ENCODE measurements at regions of chr2 and their contacts with region 1.

Region 1: DNA sequence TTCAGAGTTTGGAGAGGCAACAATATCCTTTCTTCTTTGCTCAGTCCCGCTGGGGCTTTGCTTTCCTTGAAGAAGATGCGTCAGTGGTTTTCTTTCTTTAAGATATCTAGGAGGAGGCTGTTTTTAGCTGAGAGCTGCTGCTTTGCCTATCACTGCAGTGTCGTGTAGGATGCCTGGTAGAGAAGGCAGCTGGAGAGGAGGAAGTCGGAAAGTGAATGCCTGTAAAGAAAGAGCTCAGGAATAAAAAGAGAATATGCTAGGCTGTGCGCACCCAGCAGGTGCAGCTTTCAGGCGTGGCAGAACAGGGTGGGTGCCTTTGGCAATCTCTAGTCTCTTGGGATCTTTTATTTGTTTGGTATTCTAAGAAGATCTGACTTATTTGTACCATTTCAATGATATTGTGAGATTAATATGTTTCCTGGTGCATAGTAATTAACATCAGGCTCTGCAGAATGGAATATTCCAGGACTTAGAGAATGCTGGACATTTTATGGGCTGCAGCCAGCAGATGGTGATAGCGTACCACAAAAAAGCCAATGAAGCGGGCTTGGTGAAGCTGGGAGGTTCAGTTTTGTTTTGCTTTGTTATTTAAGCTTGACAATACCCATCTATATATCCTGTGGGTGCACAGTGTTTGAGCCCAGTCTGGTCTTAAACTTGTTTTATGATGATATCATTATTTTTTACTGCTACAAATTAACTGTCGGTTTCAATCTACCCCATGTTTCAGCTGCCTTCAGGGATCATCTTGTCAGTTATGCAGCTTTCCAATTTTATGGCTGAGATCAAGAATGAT is 34.9 kb downstream of the CAVIN2 start:
- DNase-seq: peak; percentile 57
- ATAC-seq: peak; percentile 86

Region 2: DNA sequence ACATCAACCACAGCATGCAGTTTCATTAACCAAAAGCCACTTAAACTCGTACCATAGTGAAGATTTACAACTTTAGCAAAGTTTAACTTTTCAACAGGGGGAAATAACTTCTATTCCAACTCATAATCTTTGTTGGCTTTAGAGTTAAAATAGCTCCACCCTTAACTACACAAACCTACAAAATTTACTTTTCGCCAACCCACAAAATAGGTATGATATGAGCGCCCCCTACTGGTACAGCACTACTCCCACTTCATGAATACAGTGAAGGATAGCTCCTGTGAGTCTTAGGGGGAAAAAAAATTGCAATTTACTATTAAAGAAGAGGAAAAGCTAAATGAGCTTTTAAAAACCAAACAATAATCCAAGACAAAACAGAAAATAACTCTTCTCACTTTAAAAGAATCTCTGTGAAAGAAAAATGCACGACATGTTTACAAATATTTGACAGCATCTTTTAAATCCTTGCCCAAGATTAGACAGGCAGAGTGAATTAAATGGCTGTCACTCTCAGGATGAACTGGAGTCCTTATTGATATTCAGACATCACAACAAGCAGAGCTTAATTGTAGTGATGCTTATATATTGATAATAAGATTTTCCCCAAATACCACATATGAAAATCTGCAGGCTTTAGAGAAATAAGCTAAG is 350.5 kb after region 1 on chr2:
- intact Hi-C with region 1: loop called (anchors 1 kb)
- DNase-seq: no peak
- ATAC-seq: peak; percentile 81